Calu3 (cell line): ENCODE measurements at regions of chr12 and their contacts with region 1.

Region 1: DNA sequence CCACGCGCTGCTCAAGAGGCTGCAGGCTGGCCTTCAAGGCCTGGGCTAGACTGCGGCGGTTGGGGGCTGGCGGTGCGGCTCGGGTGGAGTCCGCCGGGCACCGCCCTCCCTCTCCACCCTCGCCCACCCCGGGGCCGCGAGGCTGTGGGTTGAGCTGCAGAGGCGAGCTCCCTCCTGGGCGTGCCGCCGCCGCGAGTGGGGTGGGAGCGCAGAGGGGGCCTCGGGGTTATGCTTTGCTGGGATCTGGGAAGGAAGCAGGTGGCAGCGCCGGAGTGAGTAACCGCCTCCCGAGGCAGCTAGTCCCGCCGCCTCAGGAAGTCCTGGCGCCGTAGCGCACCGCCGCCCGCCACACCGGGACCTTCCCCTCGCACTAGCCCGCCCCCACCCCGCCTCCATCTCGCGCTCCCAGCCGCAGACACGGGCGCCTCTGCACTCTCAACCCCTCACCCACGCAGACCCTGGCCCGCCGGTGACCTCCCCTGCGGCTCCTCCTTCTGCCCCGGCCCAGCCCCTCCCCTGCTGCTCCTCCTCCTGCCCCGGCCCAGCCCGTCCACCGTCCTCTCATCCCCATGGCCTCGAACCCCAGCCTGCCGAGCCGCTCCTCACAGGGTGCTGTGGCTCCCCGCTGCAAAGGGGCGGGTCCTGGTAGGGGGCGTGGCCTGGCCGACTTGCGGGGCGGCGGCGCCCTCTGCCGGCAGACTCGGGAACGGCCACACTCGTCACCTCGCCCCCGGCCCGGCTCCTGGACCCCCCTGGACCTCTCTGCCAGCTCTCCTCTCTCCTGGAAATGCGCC is 16.6 kb downstream of the TAMALIN start:
- DNase-seq: peak; percentile 86
- H3K4me3 Mint-ChIP-seq: peak overlapping the region; percentile 75
- H3K27ac Mint-ChIP-seq: no peak overlapping the region
- H3K4me1 Mint-ChIP-seq: peaks cover 40% of the 10 kb centered on the region
- H3K27me3 Mint-ChIP-seq: no peaks in the 10 kb centered on the region
- CTCF ChIP-seq: peak; percentile 83

Region 2: DNA sequence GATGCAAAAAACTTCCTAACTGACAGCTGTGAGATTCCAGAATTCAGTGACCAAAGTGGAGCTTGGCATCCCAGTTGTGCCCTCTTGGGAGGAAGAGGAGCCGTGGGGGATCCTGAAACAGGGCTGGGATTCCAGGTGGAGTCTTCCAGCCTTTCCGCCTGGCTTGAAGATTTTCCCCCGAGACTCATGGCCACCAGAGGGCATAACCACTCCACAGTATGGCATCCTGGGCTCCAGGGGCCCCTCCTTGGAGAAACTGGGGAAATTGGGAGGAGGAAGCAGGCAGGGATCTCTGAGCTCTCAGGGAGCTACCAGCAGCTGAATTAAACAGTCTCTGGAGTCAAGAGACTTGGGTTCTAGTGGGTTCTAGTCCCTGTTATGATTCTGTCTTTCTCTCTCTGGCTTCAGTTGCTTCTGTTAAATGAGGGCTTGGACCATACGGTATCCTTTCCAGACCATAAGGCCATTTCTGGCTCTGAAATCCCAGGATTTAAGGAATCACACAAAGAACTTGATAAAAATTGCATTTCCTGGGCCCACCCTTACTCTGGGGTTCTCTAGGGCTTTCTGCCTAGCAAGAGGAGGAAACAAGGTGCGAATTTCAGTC is 19.2 kb before region 1 on chr12:
- CTCF ChIA-PET with region 1: interaction called, 73 read pairs
- intact Hi-C with region 1: loop called (anchors 2 kb)
- DNase-seq: peak; percentile 66
- H3K4me3 Mint-ChIP-seq: no peak overlapping the region
- H3K27ac Mint-ChIP-seq: no peak overlapping the region
- H3K4me1 Mint-ChIP-seq: no peaks in the 10 kb centered on the region
- H3K27me3 Mint-ChIP-seq: peaks cover 15% of the 10 kb centered on the region
- CTCF ChIP-seq: peak; percentile 45

Region 3: DNA sequence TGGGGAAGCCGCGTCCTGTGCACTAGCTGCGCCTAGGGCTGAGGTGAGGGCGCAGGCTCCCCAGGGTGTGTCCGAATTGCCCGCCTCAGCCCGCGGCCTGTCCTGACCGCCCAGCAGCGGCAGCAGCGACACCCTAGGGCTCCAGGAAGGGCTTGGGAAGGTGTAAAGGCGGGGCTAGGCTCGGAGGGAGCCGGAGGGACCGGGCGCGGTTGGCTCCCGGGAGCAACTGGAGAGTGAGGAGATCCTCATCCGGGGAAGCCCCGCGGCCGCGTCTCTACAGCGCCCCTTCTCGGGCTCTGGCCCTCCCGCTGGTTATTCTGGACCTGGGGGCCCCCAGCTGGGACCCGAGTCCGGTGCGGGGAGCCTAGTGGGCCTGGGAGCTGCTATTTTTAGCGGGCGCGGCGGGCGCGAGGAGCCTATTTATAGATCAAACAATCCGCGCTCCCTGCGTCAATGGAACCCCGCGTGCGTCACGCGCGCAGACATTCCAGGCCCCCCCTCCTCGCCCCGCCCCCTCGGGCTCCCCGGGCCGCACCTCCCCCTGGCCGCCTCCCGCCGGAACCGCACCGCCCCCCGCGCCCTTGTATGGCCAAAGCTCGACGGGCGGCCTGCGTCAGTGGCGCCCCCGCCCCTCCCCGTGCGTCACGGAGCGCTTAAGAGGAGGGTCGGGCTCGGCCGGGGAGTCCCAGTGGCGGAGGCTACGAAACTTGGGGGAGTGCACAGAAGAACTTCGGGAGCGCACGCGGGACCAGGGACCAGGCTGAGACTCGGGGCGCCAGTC is 27.6 kb after region 1 on chr12 and contains the start of gene NR4A1:
- CTCF ChIA-PET with region 1: interaction called, 17 read pairs
- intact Hi-C with region 1: no loop called
- DNase-seq: peak; percentile 97
- H3K4me3 Mint-ChIP-seq: peak within 1 kb of the TSS; percentile 97
- H3K27ac Mint-ChIP-seq: peak within 1 kb of the TSS; percentile 80
- H3K4me1 Mint-ChIP-seq: peaks cover 21% of the 10 kb centered on the region
- H3K27me3 Mint-ChIP-seq: no peaks in the 10 kb centered on the region
- CTCF ChIP-seq: no peak
- total RNA-seq, gene NR4A1: 18.0 and 18.9 TPM in 2 replicates

Region 4: DNA sequence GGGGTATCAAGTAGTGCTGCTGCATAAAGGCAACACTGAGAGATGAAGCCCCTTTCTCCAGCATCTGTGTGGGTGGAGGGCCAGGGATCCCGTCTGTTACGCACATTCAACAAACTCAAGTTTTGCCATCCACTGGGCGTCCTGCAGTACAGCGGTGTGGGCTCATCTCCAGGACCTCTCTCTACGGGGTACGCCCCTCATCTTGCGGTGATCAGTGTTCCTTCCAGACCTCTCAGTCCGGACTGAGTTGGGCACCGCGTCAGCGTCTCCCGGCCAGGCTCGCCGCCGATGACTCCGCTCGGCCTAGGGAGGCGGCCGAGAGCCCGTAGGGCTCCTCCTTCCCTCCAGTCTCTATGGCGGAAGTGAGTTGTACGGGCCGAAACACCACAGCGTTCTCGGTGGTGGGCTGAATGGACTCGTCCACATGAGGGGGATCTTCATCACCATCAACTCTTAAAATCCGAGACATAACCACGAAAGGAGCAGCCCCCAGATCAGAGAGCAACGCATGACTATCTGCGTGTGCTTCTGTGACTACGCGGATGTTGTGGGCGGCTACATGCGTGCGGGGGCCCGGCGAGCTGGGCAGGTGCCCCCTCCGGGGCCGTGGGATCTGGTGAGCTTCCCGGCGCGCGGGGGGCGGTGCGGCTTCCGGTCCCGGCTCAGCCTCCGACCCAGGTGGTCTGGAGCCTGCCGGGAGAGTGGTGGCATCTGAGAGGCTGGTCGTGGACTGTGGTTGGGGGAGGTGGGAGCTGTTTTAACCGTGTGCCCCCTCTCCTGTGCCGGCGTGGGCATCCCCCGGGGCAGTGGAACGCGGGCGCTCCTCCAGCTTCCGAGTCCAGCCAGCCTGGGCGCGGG is 46.2 kb after region 1 on chr12 and contains the start of gene ATG101:
- CTCF ChIA-PET with region 1: interaction called, 25 read pairs
- intact Hi-C with region 1: no loop called
- DNase-seq: peak; percentile 86
- H3K4me3 Mint-ChIP-seq: peak within 1 kb of the TSS; percentile 95
- H3K27ac Mint-ChIP-seq: peak within 1 kb of the TSS; percentile 99
- H3K4me1 Mint-ChIP-seq: peaks cover 26% of the 10 kb centered on the region
- H3K27me3 Mint-ChIP-seq: peaks cover 11% of the 10 kb centered on the region
- CTCF ChIP-seq: peak; percentile 20
- total RNA-seq, gene ATG101: 32.8 and 35.0 TPM in 2 replicates

Region 5: GRCh38 chr12:52082988-52083637 is 59.7 kb after region 1 on chr12:
- CTCF ChIA-PET with region 1: interaction called, 37 read pairs
- intact Hi-C with region 1: loop called (anchors 1 kb)
- DNase-seq: peak; percentile 59
- H3K4me3 Mint-ChIP-seq: no peak overlapping the region
- H3K27ac Mint-ChIP-seq: no peak overlapping the region
- H3K4me1 Mint-ChIP-seq: peaks cover 6% of the 10 kb centered on the region
- H3K27me3 Mint-ChIP-seq: peaks cover 25% of the 10 kb centered on the region
- CTCF ChIP-seq: peak; percentile 76

Region 6: GRCh38 chr12:52121824-52122539 is 98.6 kb after region 1 on chr12:
- CTCF ChIA-PET with region 1: interaction called, 26 read pairs
- intact Hi-C with region 1: loop called (anchors 1 kb)
- DNase-seq: peak; percentile 65
- H3K4me3 Mint-ChIP-seq: no peak overlapping the region
- H3K27ac Mint-ChIP-seq: no peak overlapping the region
- H3K4me1 Mint-ChIP-seq: peaks cover 16% of the 10 kb centered on the region
- H3K27me3 Mint-ChIP-seq: peaks cover 27% of the 10 kb centered on the region
- CTCF ChIP-seq: no peak

Region 7: GRCh38 chr12:52167954-52168717 is 144.8 kb after region 1 on chr12:
- CTCF ChIA-PET with region 1: no interaction called
- intact Hi-C with region 1: no loop called
- DNase-seq: peak; percentile 62
- H3K4me3 Mint-ChIP-seq: no peak overlapping the region
- H3K27ac Mint-ChIP-seq: peak overlapping the region; percentile 30
- H3K4me1 Mint-ChIP-seq: peaks cover 62% of the 10 kb centered on the region
- H3K27me3 Mint-ChIP-seq: no peaks in the 10 kb centered on the region
- CTCF ChIP-seq: no peak

Region 8: GRCh38 chr12:52221912-52222457 is 198.6 kb after region 1 on chr12:
- CTCF ChIA-PET with region 1: no interaction called
- intact Hi-C with region 1: no loop called
- DNase-seq: peak; percentile 86
- H3K4me3 Mint-ChIP-seq: peak overlapping the region; percentile 36
- H3K27ac Mint-ChIP-seq: peak overlapping the region; percentile 77
- H3K4me1 Mint-ChIP-seq: peaks cover 70% of the 10 kb centered on the region
- H3K27me3 Mint-ChIP-seq: no peaks in the 10 kb centered on the region
- CTCF ChIP-seq: peak; percentile 68